ENCODE measurements at regions of chr11 and their contacts with region 1.

Region 1: DNA sequence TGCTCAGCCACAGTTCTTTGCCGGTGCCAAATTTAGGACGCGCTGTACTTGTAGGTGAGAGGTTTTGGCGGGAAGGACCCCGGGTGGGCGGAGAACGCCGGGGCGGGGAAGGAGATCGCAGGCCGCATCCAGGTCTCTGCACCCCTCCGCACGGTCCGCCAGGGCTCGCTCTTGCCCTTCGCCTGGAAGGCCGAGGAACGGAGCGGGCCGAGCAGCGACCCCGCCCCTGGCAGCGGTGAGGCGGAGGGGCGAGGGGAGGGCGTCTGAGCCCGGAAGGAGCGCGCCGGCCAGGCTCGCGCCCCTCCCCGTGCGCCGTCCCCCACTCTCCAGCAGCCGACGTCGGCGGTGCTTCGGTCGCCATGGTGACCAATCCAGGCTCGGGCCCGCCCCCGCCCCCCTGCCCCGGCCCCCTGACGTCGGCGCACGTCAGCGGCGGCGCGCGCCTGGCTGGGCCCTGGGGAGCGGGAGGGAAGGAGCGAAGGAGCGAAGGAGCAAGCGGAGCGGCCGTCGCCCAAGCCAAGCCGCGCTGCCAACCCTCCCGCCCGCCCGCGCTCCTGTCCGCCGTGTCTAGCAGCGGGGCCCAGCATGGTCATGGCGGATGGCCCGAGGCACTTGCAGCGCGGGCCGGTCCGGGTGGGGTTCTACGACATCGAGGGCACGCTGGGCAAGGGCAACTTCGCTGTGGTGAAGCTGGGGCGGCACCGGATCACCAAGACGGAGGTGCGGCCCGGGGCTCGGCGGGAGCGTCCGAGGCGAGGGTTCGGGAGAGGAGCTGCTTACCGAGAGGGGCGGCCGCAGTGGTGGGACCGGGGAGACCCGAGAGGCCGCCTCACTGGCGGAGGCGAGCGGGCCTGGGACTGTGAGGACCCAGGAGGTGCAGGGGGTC is at the start of gene SIK2:
- DNase-seq: peak; percentile 83
- ATAC-seq: peak; percentile 90
- H3K4me3 Mint-ChIP-seq: peak within 1 kb of the TSS; percentile 92
- H3K27ac Mint-ChIP-seq: peak within 1 kb of the TSS; percentile 92
- H3K4me1 Mint-ChIP-seq: peaks cover 27% of the 10 kb centered on the region
- H3K27me3 Mint-ChIP-seq: no peaks in the 10 kb centered on the region
- CTCF ChIP-seq: no peak
- total RNA-seq, gene SIK2: 10.0 and 10.2 TPM in 2 replicates

Region 2: GRCh38 chr11:111429066-111429506 is 173.1 kb before region 1 on chr11:
- CTCF ChIA-PET with region 1: no interaction called
- POLR2A ChIA-PET with region 1: no interaction called
- intact Hi-C with region 1: no loop called
- DNase-seq: no peak
- ATAC-seq: peak; percentile 91
- H3K4me3 Mint-ChIP-seq: no peak overlapping the region
- H3K27ac Mint-ChIP-seq: no peak overlapping the region
- H3K4me1 Mint-ChIP-seq: peaks cover 4% of the 10 kb centered on the region
- H3K27me3 Mint-ChIP-seq: peaks cover 2% of the 10 kb centered on the region
- CTCF ChIP-seq: no peak

Region 3: GRCh38 chr11:111586388-111586831 is 15.8 kb before region 1 on chr11:
- CTCF ChIA-PET with region 1: interaction called, 6 read pairs
- POLR2A ChIA-PET with region 1: no interaction called
- intact Hi-C with region 1: loop called (anchors 1 kb)
- DNase-seq: no peak
- ATAC-seq: peak; percentile 61
- H3K4me3 Mint-ChIP-seq: no peak overlapping the region
- H3K27ac Mint-ChIP-seq: no peak overlapping the region
- H3K4me1 Mint-ChIP-seq: peaks cover 4% of the 10 kb centered on the region
- H3K27me3 Mint-ChIP-seq: peaks cover 2% of the 10 kb centered on the region
- CTCF ChIP-seq: peak; percentile 69

Region 4: GRCh38 chr11:111676878-111677585 is 74.8 kb after region 1 on chr11:
- CTCF ChIA-PET with region 1: no interaction called
- POLR2A ChIA-PET with region 1: no interaction called
- intact Hi-C with region 1: no loop called
- DNase-seq: no peak
- ATAC-seq: no peak
- H3K4me3 Mint-ChIP-seq: no peak overlapping the region
- H3K27ac Mint-ChIP-seq: no peak overlapping the region
- H3K4me1 Mint-ChIP-seq: peaks cover 4% of the 10 kb centered on the region
- H3K27me3 Mint-ChIP-seq: no peaks in the 10 kb centered on the region
- CTCF ChIP-seq: no peak

Region 5: DNA sequence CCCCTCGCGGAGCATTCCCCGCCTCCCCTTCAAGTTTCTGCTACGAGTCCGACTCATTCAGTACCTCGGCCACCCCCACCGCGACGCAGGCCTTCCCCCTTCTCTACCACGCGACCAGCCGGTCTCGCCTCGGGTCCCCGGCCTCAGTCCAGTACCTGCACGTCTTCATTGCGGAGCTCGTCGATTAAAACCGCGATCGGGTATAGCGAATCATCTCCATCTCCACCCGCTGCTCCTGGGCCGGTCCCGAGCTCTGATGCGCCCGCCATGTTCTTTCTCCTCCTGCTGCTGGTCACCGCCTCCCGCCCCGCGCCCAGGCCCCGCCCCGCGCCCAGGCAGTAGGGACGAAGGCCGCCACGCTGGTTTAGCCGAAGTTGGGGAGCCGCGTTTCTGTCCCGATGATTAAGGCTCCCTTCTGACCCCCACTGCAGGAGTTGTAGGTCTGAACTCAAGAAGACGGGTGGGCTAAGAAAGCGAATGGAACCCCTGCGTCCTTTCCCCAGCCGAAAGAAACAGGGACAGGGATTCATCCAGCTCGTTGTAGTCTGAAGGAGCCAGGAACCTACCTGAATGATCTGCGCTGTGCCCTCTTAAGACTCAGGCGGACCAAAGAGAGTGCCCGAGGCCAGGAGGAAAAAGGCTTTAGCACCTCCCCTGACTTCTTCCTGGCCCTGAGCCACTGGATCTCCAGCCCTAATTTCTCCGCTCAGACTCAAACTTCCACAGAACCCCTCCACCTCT is 164.0 kb after region 1 on chr11 and contains the start of gene PPP2R1B:
- CTCF ChIA-PET with region 1: interaction called, 4 read pairs
- POLR2A ChIA-PET with region 1: interaction called, 7 read pairs
- intact Hi-C with region 1: loop called (anchors 1 kb)
- DNase-seq: peak; percentile 70
- ATAC-seq: peak; percentile 97
- H3K4me3 Mint-ChIP-seq: peak within 1 kb of the TSS; percentile 100
- H3K27ac Mint-ChIP-seq: peak within 1 kb of the TSS; percentile 93
- H3K4me1 Mint-ChIP-seq: peaks cover 25% of the 10 kb centered on the region
- H3K27me3 Mint-ChIP-seq: no peaks in the 10 kb centered on the region
- CTCF ChIP-seq: no peak
- total RNA-seq, gene PPP2R1B: 36.2 and 37.9 TPM in 2 replicates

Region 6: GRCh38 chr11:111841370-111842053 is 239.3 kb after region 1 on chr11:
- CTCF ChIA-PET with region 1: interaction called, 8 read pairs
- POLR2A ChIA-PET with region 1: no interaction called
- intact Hi-C with region 1: loop called (anchors 1 kb)
- DNase-seq: peak; percentile 69
- ATAC-seq: peak; percentile 84
- H3K4me3 Mint-ChIP-seq: no peak overlapping the region
- H3K27ac Mint-ChIP-seq: no peak overlapping the region
- H3K4me1 Mint-ChIP-seq: peaks cover 2% of the 10 kb centered on the region
- H3K27me3 Mint-ChIP-seq: no peaks in the 10 kb centered on the region
- CTCF ChIP-seq: peak; percentile 86

Region 7: DNA sequence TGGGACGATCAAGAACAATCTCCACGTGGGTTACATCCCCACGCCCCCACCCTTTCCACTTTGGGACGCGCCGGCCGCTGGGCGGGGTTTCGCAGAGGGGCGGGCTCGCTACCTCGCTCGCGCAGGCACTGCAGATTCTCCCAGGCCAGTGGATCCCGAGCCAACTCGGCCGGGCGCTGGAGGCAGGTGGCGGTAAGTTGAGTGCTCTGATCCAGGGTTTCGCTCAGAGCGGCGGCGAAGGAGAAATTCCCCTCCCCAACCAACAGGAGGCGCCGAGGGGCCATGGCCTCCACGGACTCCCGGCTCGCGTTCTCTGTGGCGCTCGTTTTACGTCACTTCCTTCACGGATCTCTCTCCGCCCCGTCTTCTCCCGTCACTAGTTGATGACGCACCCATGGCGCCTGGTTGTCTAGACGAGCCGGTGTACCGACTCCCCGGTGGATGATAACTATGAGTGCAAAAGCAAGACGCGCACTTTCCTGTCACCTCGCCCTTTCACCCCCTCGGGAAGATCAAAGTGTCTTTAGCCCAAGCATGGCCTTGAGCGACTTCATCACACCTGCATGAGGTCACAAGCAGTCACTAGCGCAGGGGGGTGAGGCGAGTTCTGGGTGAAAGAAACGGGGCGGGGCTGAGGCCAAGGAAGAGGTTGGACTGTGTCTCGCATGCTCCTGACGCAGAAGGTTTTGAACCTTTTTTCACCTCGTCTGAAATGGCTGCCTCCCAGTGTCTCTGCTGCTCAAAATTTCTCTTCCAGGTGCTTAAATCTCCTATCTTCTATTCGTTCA is 276.8 kb after region 1 on chr11 and contains the starts of genes CFAP68 and FDXACB1:
- CTCF ChIA-PET with region 1: no interaction called
- POLR2A ChIA-PET with region 1: interaction called, 6 read pairs
- intact Hi-C with region 1: loop called (anchors 2 kb)
- DNase-seq: peak; percentile 88
- ATAC-seq: peak; percentile 88
- H3K4me3 Mint-ChIP-seq: peak within 1 kb of the TSS; percentile 96
- H3K27ac Mint-ChIP-seq: peak within 1 kb of the TSS; percentile 100
- H3K4me1 Mint-ChIP-seq: peaks cover 17% of the 10 kb centered on the region
- H3K27me3 Mint-ChIP-seq: no peaks in the 10 kb centered on the region
- CTCF ChIP-seq: peak; percentile 59
- total RNA-seq, gene CFAP68: 11.6 and 13.7 TPM in 2 replicates
- total RNA-seq, gene FDXACB1: 7.4 and 7.8 TPM in 2 replicates

Region 8: GRCh38 chr11:112086422-112087191 is 484.4 kb after region 1 on chr11 and contains the starts of genes SDHD and TIMM8B:
- CTCF ChIA-PET with region 1: no interaction called
- POLR2A ChIA-PET with region 1: no interaction called
- intact Hi-C with region 1: loop called (anchors 2 kb)
- DNase-seq: peak; percentile 88
- ATAC-seq: peak; percentile 88
- H3K4me3 Mint-ChIP-seq: peak within 1 kb of the TSS; percentile 100
- H3K27ac Mint-ChIP-seq: peak within 1 kb of the TSS; percentile 97
- H3K4me1 Mint-ChIP-seq: peaks cover 45% of the 10 kb centered on the region
- H3K27me3 Mint-ChIP-seq: no peaks in the 10 kb centered on the region
- CTCF ChIP-seq: no peak
- total RNA-seq, gene SDHD: 79.9 and 82.1 TPM in 2 replicates
- total RNA-seq, gene TIMM8B: 37.0 and 39.6 TPM in 2 replicates

Region 9: GRCh38 chr11:113314389-113315301 is 1712.4 kb after region 1 on chr11 and contains the start of gene TTC12:
- CTCF ChIA-PET with region 1: no interaction called
- POLR2A ChIA-PET with region 1: no interaction called
- intact Hi-C with region 1: loop called (anchors 2 kb)
- DNase-seq: peak; percentile 98
- ATAC-seq: peak; percentile 99
- H3K4me3 Mint-ChIP-seq: peak within 1 kb of the TSS; percentile 85
- H3K27ac Mint-ChIP-seq: peak within 1 kb of the TSS; percentile 83
- H3K4me1 Mint-ChIP-seq: peaks cover 19% of the 10 kb centered on the region
- H3K27me3 Mint-ChIP-seq: no peaks in the 10 kb centered on the region
- CTCF ChIP-seq: no peak
- total RNA-seq, gene TTC12: 21.3 and 25.2 TPM in 2 replicates